ENCODE measurements at regions of chr12 and their contacts with region 1.

Region 1: DNA sequence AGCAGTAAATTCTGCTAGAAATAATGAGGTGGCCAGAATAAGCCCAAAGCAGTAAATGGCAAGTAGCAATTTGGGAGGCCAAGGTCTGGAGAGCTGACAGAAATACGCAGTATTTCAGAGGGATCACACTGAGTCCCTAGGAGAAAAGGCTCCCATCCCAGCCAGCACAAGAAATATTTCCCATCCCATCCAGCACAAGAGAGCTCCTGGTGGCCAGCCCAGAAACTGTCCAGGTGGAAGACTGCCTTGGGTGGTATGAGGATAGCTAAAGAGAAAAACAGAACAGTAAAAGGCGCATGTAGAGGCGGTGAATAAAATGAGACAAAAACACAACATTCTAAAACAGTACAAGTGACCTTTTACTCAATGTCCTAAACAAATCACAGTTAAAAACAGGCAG is 120.7 kb downstream of the HECTD4 start:
- DNase-seq: no peak
- ATAC-seq: peak; percentile 78
- H3K4me3 ChIP-seq: no peak overlapping the region
- H3K27ac ChIP-seq: no peak overlapping the region
- H3K4me1 ChIP-seq: no peaks in the 10 kb centered on the region
- H3K27me3 ChIP-seq: no peaks in the 10 kb centered on the region
- CTCF ChIP-seq: peak; percentile 55

Region 2: GRCh38 chr12:111893287-111893686 is 368.3 kb before region 1 on chr12:
- CTCF ChIA-PET with region 1: no interaction called
- POLR2A ChIA-PET with region 1: interaction called, 21 read pairs
- in situ Hi-C with region 1: no loop called
- intact Hi-C with region 1: no loop called
- DNase-seq: no peak
- ATAC-seq: no peak
- H3K4me3 ChIP-seq: no peak overlapping the region
- H3K27ac ChIP-seq: no peak overlapping the region
- H3K4me1 ChIP-seq: no peaks in the 10 kb centered on the region
- H3K27me3 ChIP-seq: no peaks in the 10 kb centered on the region
- CTCF ChIP-seq: no peak

Region 3: DNA sequence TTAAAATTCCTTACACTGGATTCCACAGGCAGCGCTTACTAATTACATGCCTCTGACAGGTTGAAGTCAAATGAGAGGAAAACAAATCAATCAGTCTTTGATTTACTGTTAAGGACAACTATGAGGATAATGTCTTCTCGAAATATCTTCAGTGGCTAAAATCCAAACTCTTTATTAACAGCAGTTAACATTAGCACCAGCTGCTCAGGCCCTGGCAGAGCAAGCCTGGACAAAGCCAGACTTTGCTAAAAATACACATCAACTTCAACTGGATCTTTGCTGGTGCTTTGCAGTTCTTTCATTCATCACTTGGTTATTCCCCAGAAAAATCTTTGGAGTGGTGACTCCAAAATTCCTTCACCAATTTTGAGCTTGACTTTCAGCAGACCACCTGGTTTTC is 22.0 kb after region 1 on chr12:
- CTCF ChIA-PET with region 1: interaction called, 11 read pairs
- POLR2A ChIA-PET with region 1: no interaction called
- in situ Hi-C with region 1: no loop called
- intact Hi-C with region 1: no loop called
- DNase-seq: no peak
- ATAC-seq: no peak
- H3K4me3 ChIP-seq: no peak overlapping the region
- H3K27ac ChIP-seq: no peak overlapping the region
- H3K4me1 ChIP-seq: no peaks in the 10 kb centered on the region
- H3K27me3 ChIP-seq: no peaks in the 10 kb centered on the region
- CTCF ChIP-seq: no peak

Measured in Panc1 (cell line).